ENCODE measurements at regions of chr14 and their contacts with region 1.

Region 1: GRCh38 chr14:92199763-92200162 is 78.0 kb downstream of the CPSF2 start:
- DNase-seq: no peak
- H3K4me3 ChIP-seq: no peak overlapping the region
- H3K27ac ChIP-seq: no peak overlapping the region
- H3K4me1 ChIP-seq: no peaks in the 10 kb centered on the region
- CTCF ChIP-seq: no peak

Region 2: GRCh38 chr14:91985521-91986255 is 214.1 kb before region 1 on chr14:
- CTCF ChIA-PET with region 1: no interaction called
- POLR2A ChIA-PET with region 1: no interaction called
- intact Hi-C with region 1: no loop called
- DNase-seq: no peak
- H3K4me3 ChIP-seq: no peak overlapping the region
- H3K27ac ChIP-seq: no peak overlapping the region
- H3K4me1 ChIP-seq: no peaks in the 10 kb centered on the region
- CTCF ChIP-seq: no peak

Region 3: GRCh38 chr14:92456215-92457015 is 256.7 kb after region 1 on chr14:
- CTCF ChIA-PET with region 1: no interaction called
- POLR2A ChIA-PET with region 1: no interaction called
- intact Hi-C with region 1: loop called (anchors 2 kb)
- DNase-seq: peak; percentile 57
- H3K4me3 ChIP-seq: no peak overlapping the region
- H3K27ac ChIP-seq: no peak overlapping the region
- H3K4me1 ChIP-seq: no peaks in the 10 kb centered on the region
- CTCF ChIP-seq: peak; percentile 69

Region 4: DNA sequence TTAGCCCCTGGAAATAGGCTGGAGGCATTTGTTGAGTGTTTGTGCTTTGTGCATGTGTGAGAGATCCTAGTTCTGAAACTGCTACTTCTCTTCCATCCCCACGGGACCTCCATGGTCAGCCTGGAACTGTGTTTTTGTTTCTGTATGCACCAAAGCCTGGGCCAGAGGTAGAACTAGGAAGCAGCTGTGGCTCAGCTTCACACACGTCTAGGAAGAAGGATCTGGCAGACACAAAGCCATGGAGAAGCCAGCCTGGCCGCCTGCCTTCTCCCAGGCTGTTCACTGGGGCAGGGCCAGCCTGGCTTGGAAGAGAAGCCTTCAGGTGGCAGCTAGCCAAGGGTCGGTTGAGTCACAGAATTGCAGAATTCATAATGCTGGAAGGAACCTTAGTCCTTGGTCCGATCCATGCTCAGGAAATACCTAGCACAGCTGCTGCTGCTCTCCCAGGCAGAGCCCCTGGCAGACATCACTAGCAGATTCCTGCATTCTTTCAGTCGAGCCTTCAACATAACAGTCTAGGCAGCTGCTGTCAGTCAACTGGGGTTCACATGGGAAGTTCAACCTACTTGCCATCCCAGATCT is 340.8 kb after region 1 on chr14:
- CTCF ChIA-PET with region 1: no interaction called
- POLR2A ChIA-PET with region 1: no interaction called
- intact Hi-C with region 1: no loop called
- DNase-seq: no peak
- H3K4me3 ChIP-seq: no peak overlapping the region
- H3K27ac ChIP-seq: no peak overlapping the region
- H3K4me1 ChIP-seq: peaks cover 39% of the 10 kb centered on the region
- CTCF ChIP-seq: no peak

Measured in OCI-LY7 (cell line).